ENCODE measurements at regions of chr5 and their contacts with region 1.

Region 1: DNA sequence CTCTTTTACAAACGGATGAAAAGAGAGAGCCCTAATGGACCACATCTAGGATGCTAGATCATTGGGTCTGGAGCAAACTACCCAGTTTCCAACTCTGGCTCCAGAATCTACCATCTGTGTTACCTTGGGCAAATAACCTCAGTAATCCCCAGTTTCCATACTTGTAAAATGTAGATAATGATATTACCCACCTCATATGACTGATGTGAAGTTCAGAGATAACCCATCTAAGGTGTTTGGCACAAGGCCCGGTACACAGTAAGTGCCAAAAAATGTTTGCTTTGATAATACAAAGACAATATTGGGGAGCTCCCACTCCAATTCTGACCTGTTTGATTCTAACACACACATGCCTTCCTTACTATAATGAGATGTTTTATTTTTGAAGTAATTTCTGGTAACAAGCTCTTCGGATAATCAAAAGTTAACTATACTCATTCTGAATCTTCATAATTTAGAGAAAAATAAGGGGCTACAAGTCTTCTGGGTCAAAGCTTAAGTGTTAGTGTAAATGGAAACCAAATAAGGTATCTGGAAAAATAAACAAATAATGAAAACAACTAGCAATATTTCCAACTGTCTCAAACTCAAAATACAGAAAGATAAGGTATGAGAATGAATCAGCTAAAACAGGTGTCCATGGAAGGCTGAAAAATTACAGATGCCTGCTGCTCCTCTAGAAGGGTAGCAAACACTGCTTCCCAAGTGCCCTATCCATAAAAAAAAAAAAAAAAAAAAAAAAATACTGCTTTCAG is 30.4 kb downstream of the ELL2 start:
- DNase-seq: no peak

Region 2: DNA sequence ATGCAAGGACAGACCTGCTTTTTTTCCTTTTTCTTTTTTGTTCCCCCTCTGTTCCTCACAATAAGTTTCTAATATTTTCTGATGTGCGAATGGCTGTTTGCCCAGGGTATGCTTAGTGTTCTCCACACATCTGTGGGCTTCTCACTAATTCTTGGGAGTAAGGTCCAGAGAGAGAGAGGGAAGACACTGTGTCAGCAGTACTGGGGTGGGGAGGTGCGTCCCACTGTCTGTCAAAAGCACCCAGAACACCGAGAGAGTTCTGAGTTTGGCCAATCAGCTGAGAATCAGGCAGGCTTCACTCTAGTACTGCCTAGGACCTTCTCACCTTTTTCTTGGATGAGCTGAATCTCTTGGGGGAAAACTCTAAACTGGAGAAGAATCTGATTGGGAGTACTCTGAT is 31.4 kb before region 1 on chr5:
- intact Hi-C with region 1: loop called in 1 of 2 experiments (anchors 2 kb)
- DNase-seq: no peak

Measured in posterior vena cava (tissue), 2 donors.